ENCODE measurements at regions of chrX and their contacts with region 1.

Region 1: GRCh38 chrX:131841496-131842410 is 181.3 kb upstream of the STK26 start:
- DNase-seq: peak in 2 of 5 donors; percentile 31 to 38
- ATAC-seq: peak in 3 of 4 donors; percentile 37 to 81 (median 69)
- H3K4me3 ChIP-seq: no peak overlapping the region
- H3K27ac ChIP-seq: no peak overlapping the region
- H3K4me1 ChIP-seq: peaks cover 0 to 6% (median 0%) of the 10 kb centered on the region in 12 donors
- H3K27me3 ChIP-seq: peaks cover 0 to 61% (median 0%) of the 10 kb centered on the region in 9 donors
- CTCF ChIP-seq: peak; percentile 51 to 96 (median 75)
- POLR2A ChIP-seq: no peak

Region 2: DNA sequence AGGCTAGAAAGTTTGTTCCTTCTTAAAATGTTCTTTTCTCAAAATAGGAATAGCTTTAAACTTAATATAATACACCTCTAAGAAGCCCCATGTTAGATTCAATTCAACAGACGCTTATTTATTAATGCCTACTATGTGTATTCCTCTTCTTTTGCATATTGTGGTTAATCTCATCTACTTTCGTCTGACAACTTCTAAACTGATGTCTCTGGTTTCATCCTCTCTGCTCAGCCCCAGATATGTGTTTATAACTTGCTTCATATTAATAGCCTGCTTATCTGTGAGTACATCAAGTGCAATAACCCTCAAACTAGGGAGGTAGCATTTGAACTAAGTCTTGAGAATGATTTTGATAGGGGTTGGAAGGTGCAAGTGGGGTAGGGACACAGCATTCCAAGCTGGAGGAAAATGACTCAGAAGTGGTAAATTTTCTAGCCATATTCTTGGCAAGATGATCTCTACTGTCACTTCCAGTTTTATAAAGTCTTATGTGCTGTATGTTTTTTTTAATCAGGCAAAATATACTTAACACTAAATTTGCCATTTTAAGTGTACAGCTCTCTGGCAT is 218.3 kb after region 1 on chrX:
- intact Hi-C with region 1: loop called in 2 of 10 experiments (anchors 10 kb)
- DNase-seq: no peak
- ATAC-seq: no peak
- H3K4me3 ChIP-seq: no peak overlapping the region
- H3K27ac ChIP-seq: no peak overlapping the region
- H3K4me1 ChIP-seq: no peaks in the 10 kb centered on the region
- H3K27me3 ChIP-seq: peaks cover 0 to 24% (median 0%) of the 10 kb centered on the region in 9 donors
- CTCF ChIP-seq: no peak
- POLR2A ChIP-seq: no peak

Region 3: GRCh38 chrX:132219343-132219768 is 377.6 kb after region 1 on chrX and contains the start of gene RAP2C:
- intact Hi-C with region 1: loop called in 2 of 10 experiments (anchors 10 kb)
- DNase-seq: peak; percentile 64 to 87 (median 79)
- ATAC-seq: peak; percentile 86 to 90 (median 87)
- H3K4me3 ChIP-seq: peak within 1 kb of the TSS; percentile 40 to 98 (median 80)
- H3K27ac ChIP-seq: peak within 1 kb of the TSS; percentile 88 to 99 (median 96)
- H3K4me1 ChIP-seq: peaks cover 0 to 26% (median 10%) of the 10 kb centered on the region in 12 donors
- H3K27me3 ChIP-seq: peaks cover 0 to 13% (median 0%) of the 10 kb centered on the region in 9 donors
- CTCF ChIP-seq: peak; percentile 37 to 71 (median 54)
- POLR2A ChIP-seq: no peak
- total RNA-seq, gene RAP2C: 8.2 to 23.6 (median 16.7) TPM

Region 4: DNA sequence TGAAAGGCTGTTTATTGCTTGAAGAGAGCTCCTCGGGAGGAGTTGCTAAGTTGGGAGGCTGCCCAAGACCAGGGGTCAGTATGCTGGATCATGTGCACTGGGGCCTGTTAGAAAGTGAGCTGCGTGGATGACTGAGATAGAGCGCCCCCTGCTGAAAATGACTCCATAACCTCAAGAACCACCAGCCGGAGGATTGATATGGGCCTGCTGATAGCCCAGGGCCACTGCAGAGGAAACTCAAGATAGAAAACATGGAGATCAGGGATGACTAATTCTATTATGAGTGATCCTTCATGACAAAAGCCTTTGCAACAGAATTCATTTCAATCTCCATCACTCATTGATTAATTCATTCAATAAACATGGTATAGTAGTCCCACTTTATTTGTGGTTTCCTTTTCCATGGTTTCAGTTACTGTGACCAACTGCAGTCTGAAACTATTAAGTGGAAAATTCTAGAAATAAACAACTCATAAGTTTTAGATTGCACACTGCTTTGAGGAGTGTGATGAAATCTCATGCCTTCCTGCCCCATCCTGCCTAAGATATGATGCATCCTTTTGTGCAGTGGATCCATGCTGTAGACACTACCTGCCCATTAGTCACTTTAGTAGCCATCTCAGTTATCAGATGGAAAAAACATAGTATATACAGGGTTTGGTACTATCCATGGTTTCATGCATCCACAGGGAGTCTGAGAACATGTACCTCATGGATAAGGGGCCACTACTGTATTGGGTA is 773.8 kb after region 1 on chrX:
- intact Hi-C with region 1: loop called in 4 of 10 experiments (anchors 5 to 10 kb)
- DNase-seq: peak in 3 of 5 donors; percentile 8 to 40 (median 19)
- ATAC-seq: no peak
- H3K4me3 ChIP-seq: no peak overlapping the region
- H3K27ac ChIP-seq: no peak overlapping the region
- H3K4me1 ChIP-seq: no peaks in the 10 kb centered on the region
- H3K27me3 ChIP-seq: peaks cover 0 to 32% (median 0%) of the 10 kb centered on the region in 9 donors
- CTCF ChIP-seq: peak; percentile 5 to 48 (median 34)
- POLR2A ChIP-seq: no peak

Region 5: DNA sequence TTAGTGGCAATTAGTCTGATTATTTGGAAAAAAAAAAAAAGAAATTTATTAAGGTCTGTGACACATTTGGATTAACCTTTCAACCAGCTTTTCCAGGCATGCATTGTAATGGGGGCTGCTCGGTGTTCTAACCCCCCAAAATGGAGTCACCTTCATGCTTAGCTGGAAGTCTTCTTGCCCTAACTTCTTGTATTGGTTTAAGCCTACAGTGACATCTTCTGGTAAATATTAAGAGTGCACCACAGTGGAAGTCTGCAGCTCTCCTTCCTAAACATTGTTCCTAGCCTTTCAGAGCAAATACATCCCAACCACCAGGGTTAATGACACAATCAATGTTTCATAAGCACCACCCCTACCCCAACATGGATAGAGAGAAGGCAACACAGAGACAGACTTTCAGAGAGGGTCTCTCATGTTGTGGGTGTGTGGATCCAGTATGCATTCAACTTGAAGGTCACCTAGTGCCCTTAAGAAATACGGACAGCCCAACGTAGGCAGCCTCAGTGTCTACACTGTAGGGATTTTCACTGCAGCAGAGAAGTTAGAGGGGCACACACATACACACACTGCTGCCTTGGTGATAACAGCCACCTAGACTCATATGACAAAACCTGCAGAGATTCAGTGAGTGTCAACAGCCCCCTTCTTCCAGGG is 790.0 kb after region 1 on chrX:
- intact Hi-C with region 1: loop called in 6 of 10 experiments (anchors 5 to 10 kb)
- DNase-seq: no peak
- ATAC-seq: peak in 2 of 4 donors; percentile 49 to 58
- H3K4me3 ChIP-seq: no peak overlapping the region
- H3K27ac ChIP-seq: no peak overlapping the region
- H3K4me1 ChIP-seq: no peaks in the 10 kb centered on the region
- H3K27me3 ChIP-seq: peaks cover 0 to 7% (median 0%) of the 10 kb centered on the region in 9 donors
- CTCF ChIP-seq: peak in 11 of 12 donors; percentile 26 to 55 (median 46)
- POLR2A ChIP-seq: no peak

Measured in heart left ventricle (tissue), 16 donors.